K562 (cell line): ENCODE measurements at regions of chr11 and their contacts with region 1.

Region 1: GRCh38 chr11:100980156-100980555 is 149.5 kb downstream of the PGR start:
- DNase-seq: peak in 1 of 4 experiments; percentile 30
- ATAC-seq: peak; percentile 85
- H3K4me3 ChIP-seq: no peak overlapping the region
- H3K27ac ChIP-seq: no peak overlapping the region
- H3K4me1 ChIP-seq: no peaks in the 10 kb centered on the region; a peak in 2 of 5 replicates
- H3K27me3 ChIP-seq: no peaks in the 10 kb centered on the region
- CTCF ChIP-seq: peak; percentile 33 to 54 (median 38); a peak in 4 of 6 replicates
- EP300 ChIP-seq: no peak
- POLR2A ChIP-seq: no peak
- RAD21 ChIP-seq: peak; percentile 48 to 67

Region 2: GRCh38 chr11:101436511-101437142 is 456.5 kb after region 1 on chr11:
- CTCF ChIA-PET with region 1: no interaction called
- POLR2A ChIA-PET with region 1: no interaction called
- in situ Hi-C with region 1: no loop called
- intact Hi-C with region 1: loop called (anchors 1 kb)
- DNase-seq: peak; percentile 14 to 38 (median 19)
- ATAC-seq: 0 out of 3 replicates have a peak, but pooled peaks have one; percentile 48
- H3K4me3 ChIP-seq: no peak overlapping the region
- H3K27ac ChIP-seq: no peak overlapping the region
- H3K4me1 ChIP-seq: no peaks in the 10 kb centered on the region
- H3K27me3 ChIP-seq: no peaks in the 10 kb centered on the region
- CTCF ChIP-seq: peak; percentile 24 to 52 (median 42); a peak in 4 of 6 replicates
- EP300 ChIP-seq: no peak
- POLR2A ChIP-seq: no peak
- RAD21 ChIP-seq: peak; percentile 29 to 44; a peak in 3 of 4 replicates